ENCODE measurements at regions of chr6 and their contacts with region 1.

Region 1: DNA sequence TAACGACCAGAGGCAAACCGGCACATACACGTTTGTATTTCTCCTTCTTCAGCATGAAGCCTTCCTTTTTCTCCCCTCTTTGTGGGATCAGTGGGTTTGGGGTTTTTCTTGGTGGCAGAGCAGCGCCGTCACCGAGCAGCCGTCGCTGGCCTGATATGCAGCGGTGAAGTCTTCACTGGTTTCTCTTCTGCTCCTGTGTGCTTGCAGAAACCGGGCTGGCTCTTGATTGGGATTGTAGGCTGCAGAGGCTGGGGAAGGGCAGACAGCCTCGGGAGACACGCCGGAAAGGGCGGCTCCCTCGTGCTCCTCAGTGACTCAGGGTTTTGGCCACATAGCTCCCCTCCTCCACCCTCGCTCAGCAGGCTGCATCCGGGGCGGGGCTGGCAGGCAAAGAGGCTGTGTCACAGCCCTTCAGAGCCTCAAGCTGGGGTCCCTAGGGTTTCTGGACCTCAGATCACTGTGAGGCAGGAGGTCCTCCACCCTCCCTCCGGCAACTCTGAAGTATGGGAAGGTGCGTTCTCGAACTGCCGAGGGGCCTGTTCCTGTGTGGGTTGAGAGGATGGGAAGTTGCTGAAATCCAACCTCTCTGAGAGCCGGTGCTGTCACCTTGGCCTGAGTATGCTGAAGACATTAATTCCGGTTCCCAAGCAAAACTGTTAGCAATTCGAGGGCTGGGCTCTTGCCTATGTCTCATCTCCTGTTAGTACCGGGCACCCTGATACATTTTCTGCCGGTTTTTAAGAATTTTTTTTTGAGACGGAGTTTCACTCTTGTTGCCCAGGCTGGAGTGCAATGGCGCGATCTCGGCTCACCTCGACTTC is 24.2 kb downstream of the NQO2 start:
- DNase-seq: peak; percentile 88
- H3K4me3 ChIP-seq: peak overlapping the region; percentile 61
- H3K27ac ChIP-seq: peak overlapping the region; percentile 95
- H3K4me1 ChIP-seq: peaks cover 62% of the 10 kb centered on the region
- CTCF ChIP-seq: no peak

Region 2: GRCh38 chr6:2641044-2641725 is 382.7 kb before region 1 on chr6:
- CTCF ChIA-PET with region 1: no interaction called
- POLR2A ChIA-PET with region 1: no interaction called
- intact Hi-C with region 1: no loop called
- DNase-seq: peak; percentile 2
- H3K4me3 ChIP-seq: no peak overlapping the region
- H3K27ac ChIP-seq: no peak overlapping the region
- H3K4me1 ChIP-seq: no peaks in the 10 kb centered on the region
- CTCF ChIP-seq: no peak

Region 3: GRCh38 chr6:2760882-2761842 is 262.7 kb before region 1 on chr6:
- CTCF ChIA-PET with region 1: no interaction called
- POLR2A ChIA-PET with region 1: no interaction called
- intact Hi-C with region 1: no loop called
- DNase-seq: peak; percentile 28
- H3K4me3 ChIP-seq: no peak overlapping the region
- H3K27ac ChIP-seq: no peak overlapping the region
- H3K4me1 ChIP-seq: peaks cover 7% of the 10 kb centered on the region
- CTCF ChIP-seq: peak; percentile 76

Region 4: DNA sequence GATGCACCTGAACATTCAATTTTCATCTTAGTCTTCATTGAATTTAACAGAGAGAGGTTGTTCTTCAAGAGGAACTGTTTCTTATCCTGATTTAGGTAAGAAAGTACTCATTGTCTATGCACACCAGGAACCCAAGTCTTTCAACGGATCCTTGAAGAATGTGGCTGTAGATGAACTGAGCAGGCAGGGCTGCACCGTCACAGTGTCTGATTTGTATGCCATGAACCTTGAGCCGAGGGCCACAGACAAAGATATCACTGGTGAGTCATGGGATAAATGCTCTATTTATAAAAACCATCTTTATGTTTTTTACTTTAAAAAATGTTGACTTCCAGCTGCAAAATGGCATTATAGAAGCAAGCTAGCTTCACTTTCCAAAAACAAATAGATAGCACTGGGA is 13.9 kb before region 1 on chr6:
- CTCF ChIA-PET with region 1: no interaction called
- POLR2A ChIA-PET with region 1: interaction called, 14 read pairs
- intact Hi-C with region 1: no loop called
- DNase-seq: no peak
- H3K4me3 ChIP-seq: no peak overlapping the region
- H3K27ac ChIP-seq: no peak overlapping the region
- H3K4me1 ChIP-seq: no peaks in the 10 kb centered on the region
- CTCF ChIP-seq: no peak

Measured in OCI-LY7 (cell line).